ENCODE measurements at regions of chr9 and their contacts with region 1.

Region 1: GRCh38 chr9:112465352-112465751 is 21.3 kb upstream of the KIAA1958 start:
- DNase-seq: no peak
- ATAC-seq: no peak
- H3K4me3 ChIP-seq: no peak overlapping the region
- H3K27ac ChIP-seq: no peak overlapping the region
- H3K4me1 ChIP-seq: no peaks in the 10 kb centered on the region
- H3K27me3 ChIP-seq: no peaks in the 10 kb centered on the region
- CTCF ChIP-seq: no peak

Region 2: DNA sequence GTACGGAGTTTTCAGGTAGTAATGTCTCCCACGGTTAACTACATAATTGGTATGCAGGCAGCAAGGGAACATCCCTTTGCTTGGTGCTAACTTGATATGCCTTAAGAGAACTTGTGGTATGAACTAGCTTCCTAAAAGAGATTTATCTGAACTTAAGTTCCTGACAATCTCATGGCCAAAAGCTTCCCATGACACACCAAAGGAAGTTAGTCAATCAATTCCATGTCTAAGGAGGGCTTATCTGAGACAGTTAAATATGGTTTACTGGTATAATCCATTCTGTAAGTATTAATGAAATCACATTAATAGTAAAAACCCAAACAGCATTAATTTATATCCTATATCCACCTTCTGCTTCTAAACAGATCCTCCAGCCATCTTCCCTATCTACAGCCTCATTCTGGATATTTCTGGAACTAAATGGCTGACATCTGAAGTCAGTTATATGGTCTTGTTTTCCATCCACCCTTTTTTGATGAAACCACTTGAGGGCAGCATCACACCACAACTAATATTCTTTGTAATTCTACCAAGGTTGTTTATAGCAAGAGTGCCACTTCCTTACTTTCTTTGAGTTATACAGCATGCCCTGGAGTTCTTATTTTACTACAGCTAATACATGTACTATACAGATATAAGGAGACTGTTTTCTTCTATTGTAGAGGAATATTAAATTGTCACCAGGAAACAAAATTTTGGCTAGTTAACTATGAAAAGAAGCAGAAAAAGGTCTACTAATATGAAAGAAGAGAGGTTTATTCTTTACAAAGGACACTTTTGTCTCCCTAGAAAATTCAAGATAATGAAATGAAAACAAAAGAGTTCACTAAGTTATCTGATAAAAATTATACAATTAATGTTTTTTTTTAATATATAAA is 705.4 kb before region 1 on chr9:
- intact Hi-C with region 1: no loop called
- DNase-seq: peak in 1 of 2 donors; percentile 72
- ATAC-seq: peak; percentile 65 to 93 (median 86)
- H3K4me3 ChIP-seq: no peak overlapping the region
- H3K27ac ChIP-seq: peak overlapping the region in 1 of 10 donors; percentile 41
- H3K4me1 ChIP-seq: peaks cover 0 to 12% (median 0%) of the 10 kb centered on the region in 9 donors
- H3K27me3 ChIP-seq: no peaks in the 10 kb centered on the region
- CTCF ChIP-seq: peak; percentile 50 to 81 (median 75)

Region 3: GRCh38 chr9:112411626-112412027 is 53.7 kb before region 1 on chr9:
- intact Hi-C with region 1: loop called in 1 of 10 experiments (anchors 10 kb)
- DNase-seq: no peak
- ATAC-seq: no peak
- H3K4me3 ChIP-seq: no peak overlapping the region
- H3K27ac ChIP-seq: no peak overlapping the region
- H3K4me1 ChIP-seq: peaks cover 0 to 3% (median 0%) of the 10 kb centered on the region in 9 donors
- H3K27me3 ChIP-seq: no peaks in the 10 kb centered on the region
- CTCF ChIP-seq: no peak

Region 4: GRCh38 chr9:112516769-112517168 is 51.4 kb after region 1 on chr9:
- intact Hi-C with region 1: no loop called
- DNase-seq: no peak
- ATAC-seq: no peak
- H3K4me3 ChIP-seq: no peak overlapping the region
- H3K27ac ChIP-seq: no peak overlapping the region
- H3K4me1 ChIP-seq: no peaks in the 10 kb centered on the region
- H3K27me3 ChIP-seq: no peaks in the 10 kb centered on the region
- CTCF ChIP-seq: no peak

Region 5: DNA sequence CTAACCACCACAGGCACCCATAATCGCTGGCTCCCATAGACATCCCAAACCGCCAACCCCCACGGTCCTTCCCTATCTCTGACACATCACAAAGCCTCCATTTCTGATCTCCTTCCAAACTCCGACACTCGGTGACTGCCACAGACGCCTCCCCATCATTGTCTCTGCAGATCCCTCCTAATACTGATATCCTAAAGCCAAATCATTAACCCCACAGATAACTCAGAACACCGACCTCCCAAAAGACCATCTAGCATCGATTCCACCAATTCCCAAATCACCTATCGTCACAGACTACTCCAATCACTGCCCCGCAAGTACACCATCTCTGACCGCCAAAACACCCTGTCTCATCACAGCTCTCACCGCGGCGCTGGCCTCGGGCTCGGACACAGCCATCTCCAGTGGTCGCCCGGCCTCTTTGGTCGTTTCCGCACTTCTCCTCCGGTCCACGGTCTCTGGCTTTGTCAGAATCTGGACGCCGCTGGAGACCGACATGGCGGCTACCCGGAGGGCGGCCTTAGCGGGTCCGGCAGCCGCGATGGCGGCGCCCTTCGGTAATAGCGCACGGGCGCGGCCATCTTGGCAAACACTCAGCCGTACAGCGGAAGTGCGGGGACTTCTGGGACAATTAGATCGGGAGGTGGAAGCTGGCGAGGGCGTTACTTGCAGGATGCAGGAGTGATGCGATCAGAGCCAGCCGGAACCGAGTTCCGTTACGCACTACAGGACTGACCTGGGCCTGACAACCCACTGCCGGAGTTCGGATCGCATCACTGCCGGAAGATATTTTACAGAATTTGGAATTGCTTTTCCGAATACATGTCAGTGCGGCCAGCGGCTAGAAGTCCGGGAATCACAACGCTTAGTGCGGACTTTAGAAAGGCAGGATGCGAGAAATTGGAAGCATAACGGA is 591.1 kb after region 1 on chr9 and contains the start of gene ZFP37:
- intact Hi-C with region 1: no loop called
- DNase-seq: peak; percentile 91 to 95
- ATAC-seq: peak; percentile 99 to 100 (median 100)
- H3K4me3 ChIP-seq: peak within 1 kb of the TSS; percentile 48 to 86 (median 70)
- H3K27ac ChIP-seq: peak within 1 kb of the TSS in 9 of 10 donors; percentile 51 to 87 (median 69)
- H3K4me1 ChIP-seq: peaks cover 0 to 15% (median 0%) of the 10 kb centered on the region in 9 donors
- H3K27me3 ChIP-seq: peaks cover 0 to 46% (median 28%) of the 10 kb centered on the region in 7 donors
- CTCF ChIP-seq: no peak
- total RNA-seq, gene ZFP37: 0.67 to 2.3 (median 1.6) TPM